ENCODE measurements at regions of chr2 and their contacts with region 1.

Region 1: DNA sequence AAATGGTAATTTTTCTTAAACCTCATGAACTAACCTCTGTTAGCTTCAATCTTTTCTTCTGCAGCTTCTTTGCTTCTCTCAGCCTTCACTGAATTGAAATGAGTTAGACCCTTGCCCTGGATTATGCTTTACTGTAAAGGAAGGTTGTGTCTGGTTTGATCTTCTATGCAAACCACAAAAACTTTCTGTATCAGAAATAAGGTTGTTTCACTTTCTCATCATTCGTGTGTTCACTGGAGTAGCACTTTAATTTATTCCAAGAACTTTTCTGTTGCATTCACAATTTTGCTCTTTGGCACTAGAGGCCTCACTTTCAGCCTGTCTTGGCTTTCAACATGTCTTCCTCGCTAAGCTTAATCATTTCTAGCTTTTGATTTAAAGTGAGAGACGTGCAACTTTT is 365.3 kb downstream of the TDRD15 start:
- DNase-seq: no peak
- H3K4me3 ChIP-seq: no peak overlapping the region
- H3K4me3 Mint-ChIP-seq: no peak overlapping the region
- H3K27ac Mint-ChIP-seq: no peak overlapping the region
- H3K4me1 ChIP-seq: no peaks in the 10 kb centered on the region
- H3K4me1 Mint-ChIP-seq: no peaks in the 10 kb centered on the region
- H3K27me3 ChIP-seq: no peaks in the 10 kb centered on the region
- H3K27me3 Mint-ChIP-seq: no peaks in the 10 kb centered on the region
- CTCF ChIP-seq: no peak

Region 2: GRCh38 chr2:21451418-21451817 is 37.6 kb before region 1 on chr2:
- CTCF ChIA-PET with region 1: no interaction called
- POLR2A ChIA-PET with region 1: no interaction called
- intact Hi-C with region 1: loop called (anchors 1 kb)
- DNase-seq: no peak
- H3K4me3 ChIP-seq: no peak overlapping the region
- H3K4me3 Mint-ChIP-seq: no peak overlapping the region
- H3K27ac Mint-ChIP-seq: no peak overlapping the region
- H3K4me1 ChIP-seq: peaks cover 11% of the 10 kb centered on the region; the same call in 1 of the 2 replicates
- H3K4me1 Mint-ChIP-seq: peaks cover 17% of the 10 kb centered on the region
- H3K27me3 ChIP-seq: no peaks in the 10 kb centered on the region
- H3K27me3 Mint-ChIP-seq: no peaks in the 10 kb centered on the region
- CTCF ChIP-seq: no peak

Measured in Caco-2 (cell line).